Calu3 (cell line): ENCODE measurements at regions of chr5 and their contacts with region 1.

Region 1: GRCh38 chr5:54517174-54518092 is at the start of gene SNX18:
- DNase-seq: peak; percentile 93
- H3K4me3 Mint-ChIP-seq: peak within 1 kb of the TSS; percentile 84
- H3K27ac Mint-ChIP-seq: no peak within 1 kb of the TSS
- H3K4me1 Mint-ChIP-seq: peaks cover 23% of the 10 kb centered on the region
- H3K27me3 Mint-ChIP-seq: no peaks in the 10 kb centered on the region
- CTCF ChIP-seq: peak; percentile 89
- total RNA-seq, gene SNX18: 22.8 and 26.2 TPM in 2 replicates

Region 2: DNA sequence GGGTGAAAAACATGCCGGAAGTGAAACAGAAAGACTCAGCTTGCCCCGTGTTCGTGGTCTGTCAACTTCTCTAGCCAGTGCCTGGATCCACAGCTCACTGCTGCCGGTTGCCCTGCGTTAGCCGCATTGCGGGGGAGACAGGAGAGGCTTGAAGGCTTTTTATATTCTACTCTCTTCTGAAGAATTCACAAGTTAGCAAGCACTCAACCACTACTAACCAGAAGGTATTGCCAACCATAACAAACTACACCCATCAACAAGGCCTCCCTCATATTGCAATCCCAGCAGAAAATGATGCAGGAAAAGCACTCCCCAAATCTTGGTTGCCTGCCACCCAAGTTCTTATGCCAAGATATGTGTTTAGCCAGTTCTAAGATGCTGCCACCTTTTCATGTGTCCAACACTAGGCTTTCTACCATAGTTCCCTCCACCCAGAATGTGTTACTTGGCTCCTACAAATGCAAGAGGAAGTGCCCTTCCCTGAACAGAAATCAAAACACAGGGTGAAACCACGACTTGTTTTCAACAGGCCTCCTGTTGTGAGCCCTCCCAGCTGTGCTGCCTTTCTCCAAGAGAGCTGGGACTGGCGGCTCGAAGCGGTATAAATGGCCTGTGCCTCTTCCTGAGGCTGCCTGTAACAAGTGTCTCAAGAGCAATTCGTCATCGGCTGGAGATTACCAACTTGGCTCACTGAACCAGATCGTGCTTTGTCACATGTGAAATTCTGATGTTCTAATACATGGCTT is 129.1 kb after region 1 on chr5:
- CTCF ChIA-PET with region 1: interaction called, 3 read pairs
- intact Hi-C with region 1: loop called (anchors 10 kb)
- DNase-seq: peak; percentile 38
- H3K4me3 Mint-ChIP-seq: no peak overlapping the region
- H3K27ac Mint-ChIP-seq: peak overlapping the region; percentile 1
- H3K4me1 Mint-ChIP-seq: peaks cover 43% of the 10 kb centered on the region
- H3K27me3 Mint-ChIP-seq: no peaks in the 10 kb centered on the region
- CTCF ChIP-seq: no peak

Region 3: DNA sequence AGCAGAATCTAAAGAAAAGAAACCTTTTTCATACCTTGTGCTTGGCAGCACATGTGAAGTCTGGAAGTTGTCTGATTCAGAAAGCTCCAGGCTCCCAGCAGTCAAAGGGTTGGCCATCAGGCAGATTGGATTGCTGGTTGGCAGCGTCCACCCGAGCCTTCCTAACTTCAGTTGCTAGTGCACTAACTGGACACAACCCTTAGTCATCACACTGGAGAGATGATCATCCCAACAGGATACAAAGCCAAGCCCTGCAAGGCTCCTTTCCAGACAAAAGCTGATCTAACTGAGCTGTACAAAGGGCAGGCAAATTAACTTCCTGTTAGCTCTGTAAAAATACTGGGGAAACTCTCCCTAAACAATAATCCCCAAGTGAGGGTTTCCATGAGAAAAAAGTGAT is 185.7 kb after region 1 on chr5:
- CTCF ChIA-PET with region 1: no interaction called
- intact Hi-C with region 1: loop called (anchors 1 kb)
- DNase-seq: peak; percentile 10
- H3K4me3 Mint-ChIP-seq: no peak overlapping the region
- H3K27ac Mint-ChIP-seq: peak overlapping the region; percentile 39
- H3K4me1 Mint-ChIP-seq: peaks cover 34% of the 10 kb centered on the region
- H3K27me3 Mint-ChIP-seq: no peaks in the 10 kb centered on the region
- CTCF ChIP-seq: no peak

Region 4: GRCh38 chr5:54743997-54744788 is 226.8 kb after region 1 on chr5:
- CTCF ChIA-PET with region 1: interaction called, 8 read pairs
- intact Hi-C with region 1: loop called (anchors 1 kb)
- DNase-seq: peak; percentile 32
- H3K4me3 Mint-ChIP-seq: no peak overlapping the region
- H3K27ac Mint-ChIP-seq: no peak overlapping the region
- H3K4me1 Mint-ChIP-seq: peaks cover 9% of the 10 kb centered on the region
- H3K27me3 Mint-ChIP-seq: no peaks in the 10 kb centered on the region
- CTCF ChIP-seq: no peak

Region 5: DNA sequence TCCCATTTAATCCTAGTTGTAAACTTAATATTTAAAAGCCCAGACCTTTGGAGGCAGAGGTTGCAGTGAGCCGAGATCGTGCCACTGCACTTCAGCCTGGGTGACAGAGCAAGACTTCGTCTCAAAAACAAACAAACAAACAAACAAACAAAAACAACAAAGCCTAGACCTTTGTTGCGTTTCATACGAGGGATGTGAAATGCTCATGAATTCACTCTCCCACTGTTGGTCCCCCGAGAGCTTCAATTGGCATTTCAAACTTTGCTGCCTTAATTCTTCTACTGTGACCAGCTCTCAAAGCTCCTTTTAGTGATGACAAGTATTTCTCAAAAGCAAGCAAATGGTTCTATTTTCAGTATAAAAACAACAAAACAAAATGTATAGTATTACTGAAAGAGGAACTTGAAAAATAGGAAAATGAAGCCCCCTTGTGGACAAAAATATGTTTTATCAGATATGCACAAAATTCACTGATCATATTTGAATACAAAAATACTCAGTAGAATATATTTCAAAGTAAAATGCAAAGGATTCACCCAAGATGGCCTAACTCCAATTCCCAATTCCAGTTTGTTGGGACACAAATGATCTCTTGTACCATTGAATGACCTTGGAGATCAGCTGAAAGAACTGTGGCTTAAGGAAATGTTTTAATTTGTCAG is 327.6 kb after region 1 on chr5:
- CTCF ChIA-PET with region 1: interaction called, 23 read pairs
- intact Hi-C with region 1: loop called (anchors 1 kb)
- DNase-seq: no peak
- H3K4me3 Mint-ChIP-seq: no peak overlapping the region
- H3K27ac Mint-ChIP-seq: no peak overlapping the region
- H3K4me1 Mint-ChIP-seq: no peaks in the 10 kb centered on the region
- H3K27me3 Mint-ChIP-seq: no peaks in the 10 kb centered on the region
- CTCF ChIP-seq: peak; percentile 35

Region 6: GRCh38 chr5:54867310-54867944 is 350.0 kb after region 1 on chr5:
- CTCF ChIA-PET with region 1: interaction called, 57 read pairs
- intact Hi-C with region 1: loop called (anchors 1 kb)
- DNase-seq: no peak
- H3K4me3 Mint-ChIP-seq: no peak overlapping the region
- H3K27ac Mint-ChIP-seq: no peak overlapping the region
- H3K4me1 Mint-ChIP-seq: peaks cover 2% of the 10 kb centered on the region
- H3K27me3 Mint-ChIP-seq: peaks cover 46% of the 10 kb centered on the region
- CTCF ChIP-seq: peak; percentile 41

Region 7: DNA sequence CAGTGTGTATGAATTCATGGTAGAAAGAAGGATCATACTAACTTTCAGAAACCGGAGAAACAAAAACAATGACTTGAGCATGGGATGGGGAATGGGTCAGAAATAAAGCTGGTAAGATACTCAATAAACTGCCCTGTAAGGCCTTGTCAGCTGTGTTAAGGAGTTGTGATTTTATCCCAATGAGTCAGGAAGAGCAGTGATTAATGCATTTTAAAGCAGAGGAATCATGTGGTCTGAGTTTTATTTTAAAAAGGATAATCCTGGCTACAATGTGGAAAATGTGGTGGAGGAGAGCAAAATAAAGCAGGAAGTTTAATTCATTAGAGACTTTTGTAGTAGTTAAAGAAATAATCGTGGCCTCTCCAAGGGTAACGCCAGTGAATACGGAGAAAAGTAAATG is 761.3 kb after region 1 on chr5:
- CTCF ChIA-PET with region 1: no interaction called
- intact Hi-C with region 1: no loop called
- DNase-seq: no peak
- H3K4me3 Mint-ChIP-seq: no peak overlapping the region
- H3K27ac Mint-ChIP-seq: no peak overlapping the region
- H3K4me1 Mint-ChIP-seq: no peaks in the 10 kb centered on the region
- H3K27me3 Mint-ChIP-seq: no peaks in the 10 kb centered on the region
- CTCF ChIP-seq: no peak